ENCODE measurements at regions of chr11 and their contacts with region 1.

Region 1: GRCh38 chr11:9506489-9507276 is 45.9 kb downstream of the ZNF143 start:
- DNase-seq: peak; percentile 93
- H3K4me3 ChIP-seq: no peak overlapping the region
- H3K27ac ChIP-seq: peak overlapping the region in 1 of 4 donors; percentile 10
- H3K4me1 ChIP-seq: peaks cover 0 to 12% (median 5%) of the 10 kb centered on the region in 4 donors
- H3K27me3 ChIP-seq: no peaks in the 10 kb centered on the region
- CTCF ChIP-seq: peak; percentile 87 to 96 (median 90)
- EP300 ChIP-seq: no peak
- POLR2A ChIP-seq: no peak

Region 2: GRCh38 chr11:9170450-9170849 is 336.2 kb before region 1 on chr11:
- intact Hi-C with region 1: loop called (anchors 10 kb)
- DNase-seq: no peak
- H3K4me3 ChIP-seq: no peak overlapping the region
- H3K27ac ChIP-seq: no peak overlapping the region
- H3K4me1 ChIP-seq: no peaks in the 10 kb centered on the region
- H3K27me3 ChIP-seq: no peaks in the 10 kb centered on the region
- CTCF ChIP-seq: no peak
- EP300 ChIP-seq: no peak
- POLR2A ChIP-seq: no peak

Region 3: GRCh38 chr11:9438611-9439010 is 68.1 kb before region 1 on chr11:
- intact Hi-C with region 1: loop called (anchors 5 kb)
- DNase-seq: no peak
- H3K4me3 ChIP-seq: no peak overlapping the region
- H3K27ac ChIP-seq: no peak overlapping the region
- H3K4me1 ChIP-seq: no peaks in the 10 kb centered on the region
- H3K27me3 ChIP-seq: no peaks in the 10 kb centered on the region
- CTCF ChIP-seq: no peak
- EP300 ChIP-seq: no peak
- POLR2A ChIP-seq: no peak

Measured in esophagus muscularis mucosa (tissue), 4 donors.